ENCODE measurements at regions of chr15 and their contacts with region 1.

Region 1: GRCh38 chr15:40782580-40783227 is 12.9 kb downstream of the C15orf62 start:
- DNase-seq: peak; percentile 84
- H3K4me3 Mint-ChIP-seq: no peak overlapping the region
- H3K27ac Mint-ChIP-seq: no peak overlapping the region
- H3K4me1 Mint-ChIP-seq: peaks cover 16% of the 10 kb centered on the region
- H3K27me3 Mint-ChIP-seq: no peaks in the 10 kb centered on the region

Region 2: GRCh38 chr15:40558952-40559742 is 223.6 kb before region 1 on chr15:
- CTCF ChIA-PET with region 1: no interaction called
- POLR2A ChIA-PET with region 1: no interaction called
- DNase-seq: no peak
- H3K4me3 Mint-ChIP-seq: no peak overlapping the region
- H3K27ac Mint-ChIP-seq: no peak overlapping the region
- H3K4me1 Mint-ChIP-seq: peaks cover 30% of the 10 kb centered on the region
- H3K27me3 Mint-ChIP-seq: no peaks in the 10 kb centered on the region

Region 3: DNA sequence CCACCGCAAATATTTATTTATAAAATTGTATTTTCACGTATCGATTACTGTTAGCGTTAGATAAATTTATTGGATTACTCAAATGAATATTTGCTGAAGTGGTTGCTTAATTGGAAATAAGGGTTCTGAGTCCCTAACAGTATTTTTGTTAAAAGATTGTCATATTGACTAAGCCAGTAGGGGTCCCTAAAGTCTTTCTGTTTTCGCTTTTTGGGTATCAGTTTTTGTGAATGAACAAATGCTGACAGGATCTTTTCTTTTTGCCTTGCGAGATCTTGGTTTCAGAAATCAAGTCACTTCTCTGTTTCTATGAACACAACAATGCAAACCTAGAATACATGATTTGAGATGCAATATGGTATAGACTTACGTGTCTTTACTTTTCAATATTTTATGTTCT is 80.6 kb before region 1 on chr15:
- CTCF ChIA-PET with region 1: interaction called, 17 read pairs
- POLR2A ChIA-PET with region 1: interaction called, 4 read pairs
- DNase-seq: no peak
- H3K4me3 Mint-ChIP-seq: no peak overlapping the region
- H3K27ac Mint-ChIP-seq: no peak overlapping the region
- H3K4me1 Mint-ChIP-seq: peaks cover 34% of the 10 kb centered on the region
- H3K27me3 Mint-ChIP-seq: no peaks in the 10 kb centered on the region

Region 4: DNA sequence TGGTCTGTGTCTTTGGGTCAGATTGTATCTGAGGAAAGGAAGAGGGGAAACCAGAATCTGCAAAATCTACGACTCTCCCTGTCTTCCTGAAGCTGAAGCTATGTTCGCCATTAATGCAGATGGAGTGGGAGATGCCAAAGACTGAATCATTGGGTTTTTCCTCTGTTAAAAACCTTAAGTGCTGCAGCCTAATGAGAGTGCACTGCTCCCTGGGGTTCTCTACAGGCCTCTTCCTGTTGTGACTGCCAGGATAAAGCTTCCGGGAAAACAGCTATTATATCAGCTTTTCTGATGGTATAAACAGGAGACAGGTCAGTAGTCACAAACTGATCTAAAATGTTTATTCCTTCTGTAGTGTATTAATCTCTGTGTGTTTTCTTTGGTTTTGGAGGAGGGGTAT is 51.7 kb before region 1 on chr15:
- CTCF ChIA-PET with region 1: interaction called, 13 read pairs
- POLR2A ChIA-PET with region 1: no interaction called
- DNase-seq: no peak
- H3K4me3 Mint-ChIP-seq: no peak overlapping the region
- H3K27ac Mint-ChIP-seq: peak overlapping the region; percentile 4
- H3K4me1 Mint-ChIP-seq: no peaks in the 10 kb centered on the region
- H3K27me3 Mint-ChIP-seq: no peaks in the 10 kb centered on the region

Region 5: DNA sequence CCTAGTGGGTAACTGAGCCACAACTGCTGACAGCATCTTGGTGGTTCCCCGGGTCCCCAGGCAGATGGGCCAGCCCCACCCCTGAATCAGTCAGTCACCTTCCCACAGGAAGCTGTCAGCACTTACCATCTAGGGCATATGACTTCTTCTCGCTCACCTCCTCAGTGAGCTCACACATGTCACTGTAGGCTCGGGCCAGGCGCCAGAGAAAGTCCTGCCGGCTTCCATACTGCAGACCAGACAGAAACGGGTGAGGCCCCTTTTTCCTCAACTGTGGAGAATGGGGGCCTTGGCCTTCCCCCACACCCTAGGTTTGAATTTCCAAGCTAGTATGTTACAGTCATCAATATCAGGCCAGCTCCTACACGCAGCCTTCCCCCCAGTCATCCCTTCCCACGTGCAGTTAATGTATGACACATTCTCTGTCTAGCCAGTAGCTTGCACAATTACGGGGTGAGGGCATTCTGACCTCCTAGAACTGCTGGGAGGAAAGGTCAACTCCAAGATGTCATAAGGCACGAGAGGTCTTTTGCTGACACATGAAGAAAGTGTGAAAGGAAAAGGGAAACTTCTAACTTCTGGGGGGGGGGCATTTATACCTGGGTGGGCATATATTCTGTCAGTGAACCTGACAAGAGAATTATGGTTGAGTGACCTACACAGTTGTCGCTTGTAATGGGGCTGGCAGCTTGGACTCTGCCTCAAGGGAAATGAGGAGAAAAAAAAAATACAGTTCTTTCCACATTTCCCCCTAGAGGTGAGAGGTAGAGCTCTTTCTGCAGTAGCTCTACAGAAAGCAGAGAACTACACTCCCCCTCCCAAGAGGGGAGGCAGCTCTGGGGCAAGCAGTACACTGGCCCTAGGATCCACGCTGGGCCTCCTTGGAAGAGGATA is 38.5 kb before region 1 on chr15:
- CTCF ChIA-PET with region 1: interaction called, 44 read pairs
- POLR2A ChIA-PET with region 1: interaction called, 5 read pairs
- DNase-seq: peak; percentile 85
- H3K4me3 Mint-ChIP-seq: peak overlapping the region; percentile 53
- H3K27ac Mint-ChIP-seq: peak overlapping the region; percentile 95
- H3K4me1 Mint-ChIP-seq: peaks cover 48% of the 10 kb centered on the region
- H3K27me3 Mint-ChIP-seq: no peaks in the 10 kb centered on the region

Region 6: DNA sequence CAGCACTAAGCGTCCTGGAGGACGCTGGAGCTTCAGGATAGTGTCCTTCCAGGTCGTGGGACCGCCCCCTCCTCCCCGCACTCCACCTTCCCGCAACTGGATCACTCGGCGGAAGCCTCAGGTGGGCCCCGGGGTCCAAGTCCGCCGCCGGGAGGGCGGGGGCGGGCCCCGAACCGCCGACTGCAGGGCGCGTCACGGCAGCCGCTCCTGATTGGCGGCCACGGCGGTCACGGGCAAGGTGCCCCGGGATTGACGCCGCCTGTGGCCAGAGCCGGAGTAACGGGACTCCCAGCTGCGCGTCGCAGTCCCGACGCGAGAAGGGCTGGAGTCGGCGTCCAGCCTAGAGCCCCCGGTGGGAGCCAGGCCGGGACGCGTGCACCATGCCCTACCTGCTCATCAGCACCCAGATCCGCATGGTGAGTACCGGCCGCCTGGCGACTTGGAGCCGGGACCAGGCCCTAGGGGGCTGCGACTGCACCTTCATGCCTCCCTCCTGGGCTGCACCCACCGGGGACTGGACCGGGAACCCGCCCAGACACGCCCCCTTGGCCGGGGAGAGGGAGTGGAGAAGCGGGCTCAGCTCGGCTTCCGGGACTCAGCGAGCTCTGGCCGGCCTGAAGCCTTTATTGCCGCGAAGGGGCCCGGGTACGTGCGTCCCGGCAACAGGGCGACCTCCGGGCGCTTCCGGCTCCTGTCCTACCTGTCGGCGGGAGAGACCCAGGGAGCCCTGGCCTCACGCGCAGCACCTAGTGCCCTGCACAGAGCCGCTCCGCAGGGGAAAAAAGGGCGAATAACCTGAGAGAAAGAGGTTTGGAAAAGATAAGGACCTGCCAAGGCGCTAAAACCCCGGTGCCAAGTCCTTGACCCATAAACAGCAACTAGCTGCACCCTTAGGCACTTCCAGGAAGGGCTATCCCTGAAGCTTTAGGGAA is 18.6 kb before region 1 on chr15 and contains the start of gene GCHFR:
- CTCF ChIA-PET with region 1: interaction called, 10 read pairs
- POLR2A ChIA-PET with region 1: interaction called, 34 read pairs
- DNase-seq: peak; percentile 77
- H3K4me3 Mint-ChIP-seq: peak within 1 kb of the TSS; percentile 76
- H3K27ac Mint-ChIP-seq: peak within 1 kb of the TSS; percentile 83
- H3K4me1 Mint-ChIP-seq: peaks cover 44% of the 10 kb centered on the region
- H3K27me3 Mint-ChIP-seq: no peaks in the 10 kb centered on the region
- total RNA-seq, gene GCHFR: 39.4 to 39.6 TPM

Region 7: GRCh38 chr15:40793216-40793989 is 10.7 kb after region 1 on chr15:
- CTCF ChIA-PET with region 1: interaction called, 15 read pairs
- POLR2A ChIA-PET with region 1: no interaction called
- DNase-seq: no peak
- H3K4me3 Mint-ChIP-seq: no peak overlapping the region
- H3K27ac Mint-ChIP-seq: no peak overlapping the region
- H3K4me1 Mint-ChIP-seq: peaks cover 18% of the 10 kb centered on the region
- H3K27me3 Mint-ChIP-seq: no peaks in the 10 kb centered on the region

Region 8: DNA sequence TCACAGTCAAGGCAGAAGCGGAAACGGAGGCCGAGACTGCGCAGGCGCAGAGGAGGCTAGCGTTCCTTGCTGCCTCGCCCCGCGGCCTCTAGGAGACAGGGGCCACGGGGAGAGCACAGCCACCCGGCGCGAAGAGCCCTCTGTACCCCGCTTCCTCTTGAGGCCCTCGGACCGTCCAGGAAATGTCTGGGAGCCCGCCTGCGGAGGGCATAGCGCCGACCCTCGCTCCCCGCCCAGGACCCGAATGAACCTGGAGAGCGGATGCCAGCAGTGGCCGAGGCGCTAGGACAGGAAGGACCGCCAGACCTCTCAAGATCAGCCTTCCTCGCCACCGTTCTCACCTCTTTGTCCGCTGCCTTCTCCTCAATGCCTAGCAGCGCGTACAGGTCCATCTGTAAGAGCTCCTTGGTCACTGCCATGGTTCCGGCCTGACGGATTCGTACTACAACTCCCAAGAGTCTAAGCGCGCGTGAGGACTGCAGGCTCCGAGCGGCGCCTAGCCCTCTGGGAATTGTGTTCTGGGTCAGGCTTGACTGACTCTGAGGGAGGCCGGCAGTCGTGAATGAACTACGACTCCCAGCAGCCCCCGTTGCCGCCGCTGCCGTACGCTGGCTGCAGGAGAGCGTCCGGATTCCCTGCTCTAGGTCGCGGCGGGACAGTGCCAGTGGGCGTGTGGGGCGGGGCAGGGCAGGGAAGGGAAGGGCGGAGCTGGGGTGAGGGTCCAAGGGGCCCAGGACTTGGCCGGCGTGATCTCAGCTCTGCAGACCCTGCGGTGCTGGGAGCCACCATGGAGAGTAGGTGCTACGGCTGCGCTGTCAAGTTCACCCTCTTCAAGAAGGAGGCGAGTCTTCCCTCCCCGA is 24.6 kb after region 1 on chr15 and contains the starts of genes DNAJC17 and ZFYVE19:
- CTCF ChIA-PET with region 1: interaction called, 12 read pairs
- POLR2A ChIA-PET with region 1: interaction called, 15 read pairs
- DNase-seq: peak; percentile 96
- H3K4me3 Mint-ChIP-seq: peak within 1 kb of the TSS; percentile 91
- H3K27ac Mint-ChIP-seq: peak within 1 kb of the TSS; percentile 95
- H3K4me1 Mint-ChIP-seq: peaks cover 25% of the 10 kb centered on the region
- H3K27me3 Mint-ChIP-seq: no peaks in the 10 kb centered on the region
- total RNA-seq, gene DNAJC17: 35.8 to 37.8 TPM
- total RNA-seq, gene ZFYVE19: 27.2 to 29.8 TPM